ENCODE measurements at regions of chr1 and their contacts with region 1.

Region 1: DNA sequence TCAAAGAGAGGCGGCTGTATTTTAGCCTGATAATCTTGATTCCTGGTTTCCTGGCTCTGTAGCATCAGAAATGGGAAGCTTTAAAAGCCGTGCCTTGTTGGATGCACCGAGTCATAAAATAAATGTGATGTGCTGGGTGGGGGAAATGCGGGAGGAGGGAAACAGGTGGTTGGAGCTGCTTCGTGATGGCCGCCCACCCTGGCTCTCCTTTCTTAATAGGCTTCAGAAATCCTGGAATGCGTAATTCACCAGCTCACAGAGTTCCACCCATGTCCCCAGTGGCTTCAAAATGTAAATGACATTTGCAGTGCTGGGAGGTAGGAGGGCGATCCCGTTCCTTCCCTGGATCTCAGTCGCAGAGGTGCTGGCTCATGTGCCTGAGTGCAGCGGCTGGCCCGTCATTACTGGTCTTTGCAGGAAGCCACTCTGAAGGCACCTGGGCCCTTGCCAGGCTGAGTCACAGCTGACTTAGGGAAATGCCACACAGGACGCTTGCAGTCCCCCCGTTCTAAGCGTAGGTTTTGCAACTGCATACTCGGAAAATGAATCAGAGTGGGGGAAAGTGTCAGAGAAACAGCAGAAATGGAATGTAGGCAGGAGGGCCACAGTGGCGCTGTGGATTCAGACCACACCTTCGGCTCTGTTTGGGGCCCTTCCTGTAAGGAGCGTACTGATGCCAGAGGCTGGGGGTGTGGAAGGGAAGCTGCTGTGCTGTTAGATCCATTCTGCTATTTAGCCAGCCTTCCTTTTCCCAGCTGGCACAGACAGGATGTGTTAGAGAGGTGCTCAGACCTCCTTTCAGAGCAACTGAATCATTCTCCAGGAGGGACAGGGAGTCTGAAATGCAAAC is 37.6 kb downstream of the GALNT2 start:
- DNase-seq: peak; percentile 63
- H3K4me3 Mint-ChIP-seq: peak overlapping the region; percentile 66
- H3K27ac Mint-ChIP-seq: peak overlapping the region; percentile 91
- H3K4me1 Mint-ChIP-seq: peaks cover 85% of the 10 kb centered on the region
- H3K27me3 Mint-ChIP-seq: peaks cover 1% of the 10 kb centered on the region

Region 2: DNA sequence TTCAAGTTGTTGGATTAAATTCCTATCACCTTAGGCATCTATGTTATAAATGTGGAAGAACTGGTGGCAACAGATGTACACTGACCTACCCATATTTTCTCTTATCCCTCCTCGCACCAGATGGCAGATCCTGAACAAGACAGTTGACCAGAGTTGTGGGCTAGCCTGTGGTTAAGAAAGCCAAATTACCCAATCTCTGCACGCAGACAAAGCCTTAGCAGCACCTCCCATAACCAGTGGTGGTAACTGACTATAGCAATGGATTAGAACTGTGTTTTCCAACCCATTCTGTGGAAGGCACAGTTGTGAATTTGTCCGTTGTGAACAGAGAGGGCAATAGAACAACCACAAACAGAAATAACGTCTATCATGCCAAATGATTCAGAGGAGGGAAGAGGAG is 566.7 kb before region 1 on chr1:
- intact Hi-C with region 1: loop called (anchors 5 kb)
- DNase-seq: no peak
- H3K4me3 Mint-ChIP-seq: no peak overlapping the region
- H3K27ac Mint-ChIP-seq: no peak overlapping the region
- H3K4me1 Mint-ChIP-seq: peaks cover 26% of the 10 kb centered on the region
- H3K27me3 Mint-ChIP-seq: peaks cover 2% of the 10 kb centered on the region

Region 3: DNA sequence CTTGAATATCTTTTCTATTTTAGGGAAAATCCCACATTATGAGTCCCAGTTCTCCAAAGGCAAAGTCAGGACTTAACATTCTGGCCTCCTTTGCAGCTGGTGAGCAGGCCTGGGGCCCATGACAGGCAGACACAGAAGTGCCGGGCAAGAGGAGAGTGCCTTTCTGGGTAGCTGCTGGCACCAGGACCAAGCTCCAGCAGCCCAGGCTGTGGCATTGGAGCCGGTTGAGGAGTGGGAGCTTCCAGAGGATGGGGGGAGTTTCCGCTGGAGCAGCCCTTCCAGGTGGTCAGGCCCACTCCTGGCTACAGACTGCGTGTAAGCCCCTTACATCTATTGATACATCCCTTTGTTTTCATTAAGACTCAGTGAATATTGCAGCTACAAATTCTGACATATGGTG is 354.6 kb before region 1 on chr1:
- intact Hi-C with region 1: loop called (anchors 10 kb)
- DNase-seq: no peak
- H3K4me3 Mint-ChIP-seq: no peak overlapping the region
- H3K27ac Mint-ChIP-seq: no peak overlapping the region
- H3K4me1 Mint-ChIP-seq: peaks cover 17% of the 10 kb centered on the region
- H3K27me3 Mint-ChIP-seq: peaks cover 9% of the 10 kb centered on the region

Region 4: DNA sequence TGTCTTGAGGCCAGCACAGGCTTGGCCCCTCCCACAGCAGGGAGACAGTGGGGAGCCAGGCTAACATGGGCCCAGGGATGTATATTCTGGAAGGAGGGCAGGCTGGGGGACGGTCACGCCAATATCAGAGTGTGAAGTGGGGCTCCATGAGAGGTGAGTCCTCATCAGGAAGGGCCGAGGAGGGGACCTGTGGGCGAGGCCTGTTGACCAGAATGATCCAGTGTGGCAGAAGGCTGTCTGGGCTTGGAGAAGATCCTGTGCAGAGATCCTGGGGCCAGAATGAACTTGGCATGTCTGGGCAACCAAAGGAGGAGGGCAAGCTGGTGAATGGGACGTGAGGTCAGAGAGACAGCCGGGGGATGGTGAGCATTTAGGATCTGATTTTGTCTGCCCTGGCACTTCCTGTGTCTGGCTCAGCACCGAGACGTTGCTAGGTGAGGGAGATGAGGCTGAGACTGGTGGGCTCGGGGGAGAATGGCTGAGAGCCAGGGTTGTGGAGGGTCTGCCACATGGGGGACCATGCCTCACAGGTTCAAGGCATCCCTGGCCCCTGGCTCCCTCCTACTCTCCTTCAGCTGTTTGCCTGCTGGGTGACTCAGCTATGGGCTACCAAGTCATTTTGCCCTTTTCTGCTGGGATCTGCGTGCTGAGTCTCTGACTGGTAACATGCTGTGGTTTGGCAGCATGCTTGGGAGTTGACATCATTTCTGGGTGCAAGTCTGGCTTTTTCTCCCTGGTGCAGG is 20.3 kb before region 1 on chr1:
- intact Hi-C with region 1: loop called (anchors 1 kb)
- DNase-seq: peak; percentile 23
- H3K4me3 Mint-ChIP-seq: peak overlapping the region; percentile 30
- H3K27ac Mint-ChIP-seq: peak overlapping the region; percentile 83
- H3K4me1 Mint-ChIP-seq: peaks cover 66% of the 10 kb centered on the region
- H3K27me3 Mint-ChIP-seq: peaks cover 1% of the 10 kb centered on the region

Region 5: DNA sequence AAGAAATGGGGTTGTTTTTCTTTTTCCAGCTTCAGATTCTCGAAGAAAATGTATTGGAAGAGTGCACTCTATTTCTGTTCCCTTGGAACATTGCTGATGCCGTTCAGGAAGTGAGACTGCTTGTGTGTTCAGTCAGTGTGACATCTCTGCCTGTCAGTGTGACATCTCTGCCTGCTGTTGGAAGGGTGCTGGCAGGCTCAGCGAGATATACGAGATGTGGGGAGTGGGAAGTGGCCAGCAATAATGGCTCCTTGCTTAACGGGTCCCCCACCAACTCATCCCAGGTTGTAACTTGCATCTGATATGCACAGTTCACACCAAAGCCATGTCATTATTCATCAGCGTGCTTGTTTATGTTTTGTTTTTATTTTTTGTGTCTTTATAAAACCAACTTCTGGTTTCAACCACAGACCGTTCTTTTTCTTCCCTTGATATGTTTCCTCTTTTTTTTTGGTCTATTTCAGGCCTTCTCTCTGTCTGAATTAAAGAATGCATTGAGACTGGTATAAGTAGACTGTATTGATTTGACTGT is 107.9 kb after region 1 on chr1:
- intact Hi-C with region 1: loop called (anchors 1 kb)
- DNase-seq: no peak
- H3K4me3 Mint-ChIP-seq: peak overlapping the region; percentile 34
- H3K27ac Mint-ChIP-seq: peak overlapping the region; percentile 91
- H3K4me1 Mint-ChIP-seq: peaks cover 65% of the 10 kb centered on the region
- H3K27me3 Mint-ChIP-seq: no peaks in the 10 kb centered on the region

Region 6: GRCh38 chr1:230303822-230304221 is 199.2 kb after region 1 on chr1:
- intact Hi-C with region 1: loop called (anchors 1 kb)
- DNase-seq: no peak
- H3K4me3 Mint-ChIP-seq: peak overlapping the region; percentile 1
- H3K27ac Mint-ChIP-seq: no peak overlapping the region
- H3K4me1 Mint-ChIP-seq: peaks cover 12% of the 10 kb centered on the region
- H3K27me3 Mint-ChIP-seq: peaks cover 3% of the 10 kb centered on the region

Measured in activated T-helper 1 cell treated with anti-CD3 and anti-CD28 coated beads, Interleukin-12 subunit alpha, Interleukin-12 subunit beta, Interleukin-2, Interleukin-4 antibody, amounts not matched to agents 30 ng/mL and 10 ng/mL and 1 ng/mL, durations not matched to agents 14 hours and 24 hours and 36 hours (primary cell).